ENCODE measurements at regions of chr5 and their contacts with region 1.

Region 1: GRCh38 chr5:2780394-2781171 is 29.1 kb upstream of the IRX2 start:
- DNase-seq: no peak
- ATAC-seq: no peak
- H3K4me3 ChIP-seq: no peak overlapping the region
- H3K4me3 Mint-ChIP-seq: no peak overlapping the region
- H3K27ac ChIP-seq: no peak overlapping the region
- H3K27ac Mint-ChIP-seq: no peak overlapping the region
- H3K4me1 ChIP-seq: no peaks in the 10 kb centered on the region
- H3K4me1 Mint-ChIP-seq: no peaks in the 10 kb centered on the region
- H3K27me3 ChIP-seq: no peaks in the 10 kb centered on the region
- H3K27me3 Mint-ChIP-seq: peaks cover 0 to 9% (median 6%) of the 10 kb centered on the region in 5 donors

Region 2: GRCh38 chr5:2929779-2930178 is 149.2 kb after region 1 on chr5:
- CTCF ChIA-PET with region 1: no interaction called
- POLR2A ChIA-PET with region 1: no interaction called
- intact Hi-C with region 1: loop called in 1 of 2 experiments (anchors 5 kb)
- DNase-seq: no peak
- ATAC-seq: no peak
- H3K4me3 ChIP-seq: no peak overlapping the region
- H3K4me3 Mint-ChIP-seq: no peak overlapping the region
- H3K27ac ChIP-seq: no peak overlapping the region
- H3K27ac Mint-ChIP-seq: no peak overlapping the region
- H3K4me1 ChIP-seq: no peaks in the 10 kb centered on the region
- H3K4me1 Mint-ChIP-seq: no peaks in the 10 kb centered on the region
- H3K27me3 ChIP-seq: no peaks in the 10 kb centered on the region
- H3K27me3 Mint-ChIP-seq: peaks cover 0 to 7% (median 0%) of the 10 kb centered on the region in 5 donors

Measured in naive thymus-derived CD4-positive, alpha-beta T cell (primary cell).